ENCODE measurements at regions of chr15 and their contacts with region 1.

Region 1: GRCh38 chr15:51162865-51163762 is 68.4 kb upstream of the TNFAIP8L3 start:
- DNase-seq: peak; percentile 77
- ATAC-seq: peak; percentile 91

Region 2: GRCh38 chr15:51192521-51193280 is 29.6 kb after region 1 on chr15:
- intact Hi-C with region 1: loop called (anchors 1 kb)
- DNase-seq: peak; percentile 90
- ATAC-seq: peak; percentile 81

Region 3: GRCh38 chr15:51401872-51402517 is 238.9 kb after region 1 on chr15:
- intact Hi-C with region 1: loop called (anchors 2 kb)
- DNase-seq: peak; percentile 78
- ATAC-seq: peak; percentile 38

Measured in Right ventricle myocardium inferior (tissue), 1 donor.